ENCODE measurements at regions of chr7 and their contacts with region 1.

Region 1: GRCh38 chr7:30284298-30285066 is at the start of gene ZNRF2:
- DNase-seq: peak; percentile 99
- H3K4me3 ChIP-seq: peak within 1 kb of the TSS; percentile 39 to 57 (median 44)
- H3K27ac ChIP-seq: peak within 1 kb of the TSS; percentile 84
- H3K4me1 ChIP-seq: peaks cover 13% of the 10 kb centered on the region
- H3K27me3 ChIP-seq: no peaks in the 10 kb centered on the region
- CTCF ChIP-seq: peak; percentile 14 to 29
- POLR2A ChIP-seq: peak; percentile 19
- total RNA-seq, gene ZNRF2: 5.7 and 5.9 TPM in 2 replicates

Region 2: DNA sequence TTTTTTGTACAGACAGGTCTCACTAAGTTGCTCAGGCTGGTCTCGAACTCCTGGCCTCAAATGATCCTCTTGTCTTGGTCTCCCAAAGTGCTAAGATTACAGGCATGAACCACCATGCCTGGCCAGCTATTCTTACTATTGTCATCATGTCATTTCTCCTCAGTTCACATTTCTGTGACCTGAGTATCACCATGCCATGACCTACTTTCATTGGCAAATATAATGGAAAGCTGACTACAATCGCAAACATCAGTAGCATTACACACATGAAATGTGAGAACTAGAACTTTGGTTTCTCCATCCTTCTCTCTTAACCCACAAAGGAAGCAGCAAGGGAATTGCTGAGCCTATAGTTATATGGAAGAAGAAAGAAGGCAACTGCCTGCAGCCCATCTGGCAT is 504.1 kb before region 1 on chr7:
- CTCF ChIA-PET with region 1: no interaction called
- POLR2A ChIA-PET with region 1: no interaction called
- dilution Hi-C with region 1: no loop called
- intact Hi-C with region 1: no loop called
- DNase-seq: no peak
- H3K4me3 ChIP-seq: no peak overlapping the region
- H3K27ac ChIP-seq: no peak overlapping the region
- H3K4me1 ChIP-seq: no peaks in the 10 kb centered on the region
- H3K27me3 ChIP-seq: peaks cover 15 to 16% of the 10 kb centered on the region in 2 experiments
- CTCF ChIP-seq: no peak
- POLR2A ChIP-seq: no peak

Region 3: DNA sequence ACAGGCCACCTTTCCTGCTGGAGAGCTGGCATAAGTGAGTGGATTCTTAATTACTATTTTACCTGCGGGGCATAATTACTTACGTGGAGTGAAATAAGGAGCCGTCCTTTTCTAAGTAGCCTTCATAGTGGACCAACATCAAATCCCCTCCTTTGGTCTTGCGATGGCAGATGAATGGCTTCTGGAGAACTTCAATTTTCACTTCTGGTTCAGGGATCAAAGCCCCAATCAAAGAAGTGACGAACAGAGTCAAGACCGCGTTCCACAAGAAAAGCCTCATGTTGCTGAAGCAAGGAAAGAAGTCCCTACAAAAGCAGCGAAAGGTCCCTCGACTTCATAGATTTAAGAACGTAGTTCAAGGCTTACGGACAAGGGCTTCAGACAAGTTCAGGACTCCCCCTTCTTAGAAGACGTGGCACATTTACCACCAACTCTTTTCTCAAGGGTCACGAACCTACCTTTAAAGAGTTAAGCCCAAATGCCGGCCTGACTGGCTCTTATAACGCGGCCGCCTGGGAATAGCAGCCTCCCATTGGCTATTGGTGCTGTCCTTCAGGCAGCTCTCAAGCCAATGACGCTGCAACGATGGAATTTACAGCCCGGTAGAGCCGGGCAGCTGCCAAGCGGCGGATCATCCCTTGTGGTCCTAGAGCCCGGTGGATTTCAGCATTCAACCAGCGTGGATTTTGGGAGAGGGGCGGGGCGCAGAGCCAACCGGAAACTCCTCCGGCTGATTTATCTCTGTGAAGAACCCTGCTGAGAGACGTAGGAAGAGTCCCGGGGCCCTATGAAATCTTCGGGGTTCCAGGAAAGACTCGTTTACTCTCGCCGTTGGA is 258.0 kb before region 1 on chr7 and contains the start of gene FKBP14:
- CTCF ChIA-PET with region 1: no interaction called
- POLR2A ChIA-PET with region 1: no interaction called
- dilution Hi-C with region 1: no loop called
- intact Hi-C with region 1: loop called (anchors 5 kb)
- DNase-seq: peak; percentile 98
- H3K4me3 ChIP-seq: peak within 1 kb of the TSS; percentile 74 to 100 (median 99)
- H3K27ac ChIP-seq: peak within 1 kb of the TSS; percentile 83
- H3K4me1 ChIP-seq: peaks cover 35% of the 10 kb centered on the region
- H3K27me3 ChIP-seq: no peaks in the 10 kb centered on the region
- CTCF ChIP-seq: no peak
- POLR2A ChIP-seq: peak; percentile 79
- total RNA-seq, gene FKBP14: 37.4 and 37.6 TPM in 2 replicates

Region 4: DNA sequence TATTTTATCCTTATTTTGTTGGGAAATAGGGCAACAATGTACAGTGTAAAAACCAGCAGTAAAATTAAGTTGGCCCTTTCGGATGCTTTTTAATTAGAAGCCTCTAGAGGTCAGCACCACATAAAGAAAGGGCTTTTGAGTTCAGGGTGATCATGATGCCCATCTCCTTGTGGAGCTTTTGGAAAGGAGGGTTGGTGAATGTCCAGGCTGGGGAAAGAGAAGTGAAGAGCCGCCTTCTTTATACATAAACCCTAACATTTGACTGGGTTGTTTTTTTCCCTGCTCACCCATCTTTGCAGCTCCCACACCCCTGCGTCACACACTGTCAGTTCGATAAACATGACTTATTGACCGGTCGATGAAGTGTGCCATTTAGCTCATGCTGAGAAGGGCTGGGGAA is 119.9 kb before region 1 on chr7:
- CTCF ChIA-PET with region 1: interaction called, 4 read pairs
- POLR2A ChIA-PET with region 1: no interaction called
- dilution Hi-C with region 1: no loop called
- intact Hi-C with region 1: loop called (anchors 2 kb)
- DNase-seq: peak; percentile 74
- H3K4me3 ChIP-seq: no peak overlapping the region
- H3K27ac ChIP-seq: no peak overlapping the region
- H3K4me1 ChIP-seq: peaks cover 31% of the 10 kb centered on the region
- H3K27me3 ChIP-seq: peaks cover 0 to under 1% of the 10 kb centered on the region in 2 experiments
- CTCF ChIP-seq: peak; percentile 37
- POLR2A ChIP-seq: no peak

Region 5: DNA sequence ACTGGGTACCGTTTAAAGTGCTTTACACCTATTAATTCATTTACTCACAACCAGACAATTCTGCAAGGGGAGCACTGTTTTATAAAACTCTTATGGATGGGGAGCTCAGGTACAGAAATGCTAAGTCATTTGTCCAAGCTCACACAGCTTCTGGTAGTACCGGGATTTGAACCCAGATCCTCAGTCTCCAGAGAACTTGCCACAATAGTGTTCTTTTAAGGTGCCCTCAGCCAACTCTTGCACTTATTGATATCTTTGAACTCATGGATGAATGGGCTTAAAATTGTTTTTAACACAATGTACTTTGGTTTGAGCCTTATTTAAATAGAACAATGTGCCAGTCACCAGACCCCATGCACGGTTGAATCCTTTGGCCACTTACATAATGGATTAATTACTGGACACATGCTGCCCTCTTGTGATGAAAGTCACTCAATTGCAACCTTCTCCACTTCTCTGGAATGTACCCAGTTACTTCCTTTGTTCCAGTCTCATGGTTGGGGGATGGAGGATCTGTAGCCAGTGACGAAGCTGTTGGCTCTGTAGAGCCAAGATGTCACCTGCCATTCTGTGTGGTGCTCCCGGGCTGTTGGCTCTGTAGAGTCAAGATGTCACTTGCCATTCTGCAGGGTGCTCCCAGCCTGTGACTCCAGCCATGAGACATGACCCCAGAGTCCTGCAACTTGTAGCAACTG is 128.5 kb after region 1 on chr7:
- CTCF ChIA-PET with region 1: interaction called, 96 read pairs
- POLR2A ChIA-PET with region 1: no interaction called
- dilution Hi-C with region 1: no loop called
- intact Hi-C with region 1: loop called (anchors 2 kb)
- DNase-seq: peak; percentile 90
- H3K4me3 ChIP-seq: no peak overlapping the region
- H3K27ac ChIP-seq: no peak overlapping the region
- H3K4me1 ChIP-seq: no peaks in the 10 kb centered on the region
- H3K27me3 ChIP-seq: no peaks in the 10 kb centered on the region
- CTCF ChIP-seq: peak; percentile 57 to 62
- POLR2A ChIP-seq: no peak

Region 6: GRCh38 chr7:30459591-30460257 is 175.2 kb after region 1 on chr7:
- CTCF ChIA-PET with region 1: no interaction called
- POLR2A ChIA-PET with region 1: no interaction called
- dilution Hi-C with region 1: no loop called
- intact Hi-C with region 1: loop called (anchors 2 kb)
- DNase-seq: peak; percentile 79
- H3K4me3 ChIP-seq: no peak overlapping the region
- H3K27ac ChIP-seq: peak overlapping the region; percentile 56
- H3K4me1 ChIP-seq: peaks cover 18% of the 10 kb centered on the region
- H3K27me3 ChIP-seq: no peaks in the 10 kb centered on the region
- CTCF ChIP-seq: no peak
- POLR2A ChIP-seq: no peak

Region 7: GRCh38 chr7:30469303-30469702 is 184.8 kb after region 1 on chr7:
- CTCF ChIA-PET with region 1: no interaction called
- POLR2A ChIA-PET with region 1: no interaction called
- dilution Hi-C with region 1: no loop called
- intact Hi-C with region 1: loop called (anchors 2 kb)
- DNase-seq: peak; percentile 99
- H3K4me3 ChIP-seq: no peak overlapping the region
- H3K27ac ChIP-seq: peak overlapping the region; percentile 93
- H3K4me1 ChIP-seq: peaks cover 60% of the 10 kb centered on the region
- H3K27me3 ChIP-seq: no peaks in the 10 kb centered on the region
- CTCF ChIP-seq: peak; percentile 49 to 52
- POLR2A ChIP-seq: peak; percentile 43

Region 8: GRCh38 chr7:30504347-30505173 is 220.1 kb after region 1 on chr7 and contains the start of gene GGCT:
- CTCF ChIA-PET with region 1: no interaction called
- POLR2A ChIA-PET with region 1: no interaction called
- dilution Hi-C with region 1: no loop called
- intact Hi-C with region 1: loop called (anchors 10 kb)
- DNase-seq: peak; percentile 99
- H3K4me3 ChIP-seq: peak within 1 kb of the TSS; percentile 76 to 83 (median 78)
- H3K27ac ChIP-seq: peak within 1 kb of the TSS; percentile 54
- H3K4me1 ChIP-seq: peaks cover 15% of the 10 kb centered on the region
- H3K27me3 ChIP-seq: no peaks in the 10 kb centered on the region
- CTCF ChIP-seq: no peak
- POLR2A ChIP-seq: peak; percentile 93
- total RNA-seq, gene GGCT: 44.3 and 46.9 TPM in 2 replicates